ENCODE measurements at regions of chr15 and their contacts with region 1.

Region 1: GRCh38 chr15:65054333-65055200 is 9.4 kb downstream of the SLC51B start:
- DNase-seq: peak; percentile 71
- H3K4me3 Mint-ChIP-seq: no peak overlapping the region
- H3K27ac Mint-ChIP-seq: no peak overlapping the region
- H3K4me1 Mint-ChIP-seq: peaks cover 8% of the 10 kb centered on the region
- H3K27me3 Mint-ChIP-seq: no peaks in the 10 kb centered on the region

Region 2: DNA sequence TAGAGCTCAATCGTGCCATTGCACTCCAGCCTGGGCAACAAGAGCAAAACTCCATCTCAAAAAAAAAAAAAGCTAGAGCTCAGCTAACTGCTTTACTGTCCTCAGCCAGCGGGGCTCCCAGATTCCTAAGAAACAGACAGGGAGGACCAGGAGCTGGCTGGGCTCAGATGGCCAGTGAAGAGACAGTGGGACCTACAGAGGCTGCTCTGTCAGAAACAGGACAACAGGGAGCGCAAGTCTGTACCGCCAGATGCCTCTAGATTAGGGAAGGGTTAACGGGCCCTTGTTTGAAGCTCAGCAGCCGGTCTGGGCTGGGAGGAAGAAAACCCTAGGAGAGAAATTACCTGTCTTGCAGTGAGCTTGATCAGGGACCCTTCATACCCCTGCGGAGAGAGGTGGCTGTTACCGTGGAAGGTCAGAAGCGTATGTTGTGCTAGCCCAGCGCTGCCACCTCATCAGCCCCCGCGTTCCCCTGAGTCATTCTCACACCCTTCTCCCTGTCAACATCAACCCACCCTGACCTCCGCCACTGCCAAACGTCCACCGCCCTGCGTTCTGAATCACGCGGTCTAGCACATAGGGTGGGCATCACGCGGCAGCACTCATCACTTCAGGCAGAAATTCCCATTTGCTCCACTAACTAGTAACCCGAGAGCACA is 304.4 kb before region 1 on chr15:
- CTCF ChIA-PET with region 1: no interaction called
- intact Hi-C with region 1: no loop called
- DNase-seq: no peak
- H3K4me3 Mint-ChIP-seq: no peak overlapping the region
- H3K27ac Mint-ChIP-seq: no peak overlapping the region
- H3K4me1 Mint-ChIP-seq: no peaks in the 10 kb centered on the region
- H3K27me3 Mint-ChIP-seq: peaks cover 2% of the 10 kb centered on the region

Region 3: GRCh38 chr15:65077981-65078352 is 23.4 kb after region 1 on chr15:
- CTCF ChIA-PET with region 1: interaction called, 13 read pairs
- intact Hi-C with region 1: loop called (anchors 1 kb)
- DNase-seq: peak; percentile 70
- H3K4me3 Mint-ChIP-seq: no peak overlapping the region
- H3K27ac Mint-ChIP-seq: no peak overlapping the region
- H3K4me1 Mint-ChIP-seq: peaks cover 18% of the 10 kb centered on the region
- H3K27me3 Mint-ChIP-seq: peaks cover 29% of the 10 kb centered on the region

Region 4: GRCh38 chr15:65101411-65101890 is 46.9 kb after region 1 on chr15:
- CTCF ChIA-PET with region 1: interaction called, 10 read pairs
- intact Hi-C with region 1: loop called (anchors 1 kb)
- DNase-seq: peak; percentile 76
- H3K4me3 Mint-ChIP-seq: no peak overlapping the region
- H3K27ac Mint-ChIP-seq: no peak overlapping the region
- H3K4me1 Mint-ChIP-seq: no peaks in the 10 kb centered on the region
- H3K27me3 Mint-ChIP-seq: no peaks in the 10 kb centered on the region

Measured in activated naive CD4-positive, alpha-beta T cell treated with anti-CD3 and anti-CD28 coated beads for 36 hours (primary cell).